CD4-positive, alpha-beta T cell (primary cell): ENCODE measurements at regions of chr3 and their contacts with region 1.

Region 1: GRCh38 chr3:32428092-32429068 is 36.7 kb downstream of the CMTM7 start:
- DNase-seq: peak in 12 of 14 experiments; percentile 18 to 81 (median 43)
- ATAC-seq: peak; percentile 58
- H3K4me3 ChIP-seq: peak overlapping the region; percentile 29
- H3K4me3 Mint-ChIP-seq: peak overlapping the region; percentile 80
- H3K27ac ChIP-seq: peak overlapping the region; percentile 73 to 83
- H3K27ac Mint-ChIP-seq: peak overlapping the region; percentile 95
- H3K4me1 ChIP-seq: peaks cover 81% of the 10 kb centered on the region
- H3K4me1 Mint-ChIP-seq: peaks cover 90% of the 10 kb centered on the region
- H3K27me3 ChIP-seq: no peaks in the 10 kb centered on the region
- H3K27me3 Mint-ChIP-seq: no peaks in the 10 kb centered on the region
- CTCF ChIP-seq: no peak

Region 2: DNA sequence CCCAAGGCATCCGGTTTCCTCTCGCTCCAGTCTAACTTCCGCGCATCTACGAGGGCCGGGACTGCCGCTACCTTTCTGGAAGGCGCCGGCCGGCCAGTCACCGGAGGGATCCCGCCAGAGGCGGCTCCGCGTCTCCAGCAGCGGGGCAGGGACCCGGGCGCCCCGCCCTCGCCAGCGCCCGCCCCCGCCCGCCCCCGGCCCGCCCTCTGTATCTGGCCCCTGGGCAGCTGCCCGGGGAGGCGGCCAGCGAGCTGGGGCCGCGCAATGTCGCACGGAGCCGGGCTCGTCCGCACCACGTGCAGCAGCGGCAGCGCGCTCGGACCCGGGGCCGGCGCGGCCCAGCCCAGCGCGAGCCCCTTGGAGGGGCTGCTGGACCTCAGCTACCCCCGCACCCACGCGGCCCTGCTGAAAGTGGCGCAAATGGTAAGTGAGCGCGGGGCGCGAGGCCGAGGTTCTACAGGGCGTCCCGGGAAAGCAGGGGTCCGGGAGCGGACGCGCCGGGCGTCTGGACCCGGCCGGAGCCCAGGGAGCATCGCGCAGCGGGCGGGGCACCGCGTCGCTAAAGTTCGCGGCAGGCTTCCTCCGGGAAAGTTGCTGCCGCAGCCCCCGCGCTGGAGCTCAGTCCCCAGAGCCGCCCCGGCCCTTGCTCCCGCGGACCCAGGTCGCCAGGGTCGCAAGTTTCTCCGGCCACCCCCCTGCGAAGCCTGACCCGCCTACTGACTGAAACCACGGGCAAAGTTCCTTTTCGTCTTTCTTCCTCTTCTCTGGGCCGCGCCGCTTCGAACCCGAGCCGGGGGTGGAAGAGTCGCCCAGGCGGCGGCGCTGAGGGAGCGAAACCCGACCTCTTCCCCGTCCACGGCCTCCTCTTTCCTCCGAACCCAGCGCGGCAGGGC is 36.5 kb before region 1 on chr3 and contains the start of gene CMTM7:
- CTCF ChIA-PET with region 1: no interaction called
- POLR2A ChIA-PET with region 1: interaction called, 24 read pairs
- intact Hi-C with region 1: loop called (anchors 2 to 5 kb)
- DNase-seq: peak; percentile 32 to 81 (median 52)
- ATAC-seq: peak; percentile 54
- H3K4me3 ChIP-seq: peak within 1 kb of the TSS; percentile 92
- H3K4me3 Mint-ChIP-seq: peak within 1 kb of the TSS; percentile 97
- H3K27ac ChIP-seq: peak within 1 kb of the TSS; percentile 77 to 79
- H3K27ac Mint-ChIP-seq: peak within 1 kb of the TSS; percentile 91
- H3K4me1 ChIP-seq: peaks cover 47% of the 10 kb centered on the region
- H3K4me1 Mint-ChIP-seq: peaks cover 61% of the 10 kb centered on the region
- H3K27me3 ChIP-seq: no peaks in the 10 kb centered on the region
- H3K27me3 Mint-ChIP-seq: no peaks in the 10 kb centered on the region
- CTCF ChIP-seq: no peak
- total RNA-seq, gene CMTM7: 31.5 to 35.2 TPM

Region 3: GRCh38 chr3:32401556-32402081 is 26.8 kb before region 1 on chr3:
- CTCF ChIA-PET with region 1: interaction called, 4 read pairs
- POLR2A ChIA-PET with region 1: interaction called, 7 read pairs
- intact Hi-C with region 1: loop called in 1 of 2 experiments (anchors 5 kb)
- DNase-seq: peak; percentile 37 to 84 (median 58)
- ATAC-seq: peak; percentile 73
- H3K4me3 ChIP-seq: peak overlapping the region; percentile 65
- H3K4me3 Mint-ChIP-seq: peak overlapping the region; percentile 92
- H3K27ac ChIP-seq: peak overlapping the region; percentile 85 to 92
- H3K27ac Mint-ChIP-seq: peak overlapping the region; percentile 90
- H3K4me1 ChIP-seq: peaks cover 62% of the 10 kb centered on the region
- H3K4me1 Mint-ChIP-seq: peaks cover 77% of the 10 kb centered on the region
- H3K27me3 ChIP-seq: no peaks in the 10 kb centered on the region
- H3K27me3 Mint-ChIP-seq: no peaks in the 10 kb centered on the region
- CTCF ChIP-seq: no peak

Region 4: DNA sequence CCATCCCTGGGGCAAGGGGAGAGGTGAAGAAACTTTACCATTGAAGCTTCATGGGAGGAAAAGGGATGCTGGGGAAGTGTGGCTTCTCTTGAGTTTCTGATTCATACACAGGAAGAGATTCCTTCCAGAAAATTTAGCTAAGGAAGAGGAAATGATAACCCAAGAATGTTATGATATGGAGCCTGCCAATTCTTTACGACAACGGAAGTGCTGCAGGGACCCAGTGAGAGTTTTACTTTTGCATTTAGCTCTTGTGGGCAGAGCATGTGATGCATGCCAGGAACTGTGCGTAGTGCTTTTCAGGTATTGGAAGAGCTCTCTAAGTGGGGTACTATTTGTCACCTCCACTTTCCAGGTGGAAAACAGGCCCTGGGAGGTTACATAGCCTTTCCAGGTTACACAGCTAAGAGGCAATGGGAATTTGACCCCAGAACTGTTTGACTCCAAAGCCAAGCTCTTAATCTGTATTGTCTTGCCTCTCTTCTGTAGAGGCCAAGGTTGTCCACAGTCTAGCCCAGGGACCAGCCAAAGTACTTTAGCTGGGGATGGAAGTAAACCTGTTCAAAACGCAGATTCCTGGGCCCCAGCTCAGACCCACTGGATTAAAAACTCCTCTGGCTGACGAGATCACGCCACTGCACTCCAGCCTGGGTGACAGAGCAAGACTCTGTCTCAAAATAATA is 13.7 kb before region 1 on chr3:
- CTCF ChIA-PET with region 1: interaction called, 11 read pairs
- POLR2A ChIA-PET with region 1: interaction called, 85 read pairs
- intact Hi-C with region 1: loop called in 1 of 2 experiments (anchors 2 kb)
- DNase-seq: peak in 10 of 14 experiments; percentile 34 to 86 (median 52)
- ATAC-seq: peak; percentile 95
- H3K4me3 ChIP-seq: no peak overlapping the region
- H3K4me3 Mint-ChIP-seq: peak overlapping the region; percentile 43
- H3K27ac ChIP-seq: peak overlapping the region; percentile 39 to 76
- H3K27ac Mint-ChIP-seq: peak overlapping the region; percentile 95
- H3K4me1 ChIP-seq: peaks cover 41% of the 10 kb centered on the region
- H3K4me1 Mint-ChIP-seq: peaks cover 83% of the 10 kb centered on the region
- H3K27me3 ChIP-seq: no peaks in the 10 kb centered on the region
- H3K27me3 Mint-ChIP-seq: no peaks in the 10 kb centered on the region
- CTCF ChIP-seq: no peak

Region 5: GRCh38 chr3:32438596-32439344 is 10.4 kb after region 1 on chr3:
- CTCF ChIA-PET with region 1: interaction called, 4 read pairs
- POLR2A ChIA-PET with region 1: interaction called, 49 read pairs
- intact Hi-C with region 1: no loop called
- DNase-seq: peak in 2 of 14 experiments; percentile 35 to 40
- ATAC-seq: peak; percentile 50
- H3K4me3 ChIP-seq: no peak overlapping the region
- H3K4me3 Mint-ChIP-seq: peak overlapping the region; percentile 65
- H3K27ac ChIP-seq: peak overlapping the region in 1 of 2 donors; percentile 32
- H3K27ac Mint-ChIP-seq: peak overlapping the region; percentile 95
- H3K4me1 ChIP-seq: peaks cover 58% of the 10 kb centered on the region
- H3K4me1 Mint-ChIP-seq: peaks cover 72% of the 10 kb centered on the region
- H3K27me3 ChIP-seq: no peaks in the 10 kb centered on the region
- H3K27me3 Mint-ChIP-seq: no peaks in the 10 kb centered on the region
- CTCF ChIP-seq: no peak